Astrocyte of the cerebellum (primary cell): ENCODE measurements at regions of chrX and their contacts with region 1.

Region 1: DNA sequence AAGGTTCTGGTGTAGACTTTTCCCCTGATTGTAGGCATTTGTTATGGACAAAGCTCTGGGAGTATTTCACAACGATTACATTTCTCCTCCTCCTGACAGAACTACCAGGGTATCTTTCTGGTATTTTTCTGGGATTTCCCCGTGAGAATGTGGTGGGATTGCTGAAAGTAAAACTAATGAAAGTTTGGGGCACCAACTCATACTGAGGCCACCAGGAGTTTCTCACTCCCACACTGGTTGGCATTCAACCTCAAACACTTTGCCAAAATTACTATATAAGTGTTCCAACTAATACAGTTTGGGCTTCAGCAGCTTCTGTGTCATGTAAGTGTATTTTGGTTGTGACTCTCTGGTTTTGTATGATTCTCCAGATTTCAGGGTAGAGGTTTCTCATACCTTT is 855.1 kb downstream of the GLUD2 start:
- DNase-seq: no peak
- H3K4me3 ChIP-seq: no peak overlapping the region
- CTCF ChIP-seq: no peak

Region 2: DNA sequence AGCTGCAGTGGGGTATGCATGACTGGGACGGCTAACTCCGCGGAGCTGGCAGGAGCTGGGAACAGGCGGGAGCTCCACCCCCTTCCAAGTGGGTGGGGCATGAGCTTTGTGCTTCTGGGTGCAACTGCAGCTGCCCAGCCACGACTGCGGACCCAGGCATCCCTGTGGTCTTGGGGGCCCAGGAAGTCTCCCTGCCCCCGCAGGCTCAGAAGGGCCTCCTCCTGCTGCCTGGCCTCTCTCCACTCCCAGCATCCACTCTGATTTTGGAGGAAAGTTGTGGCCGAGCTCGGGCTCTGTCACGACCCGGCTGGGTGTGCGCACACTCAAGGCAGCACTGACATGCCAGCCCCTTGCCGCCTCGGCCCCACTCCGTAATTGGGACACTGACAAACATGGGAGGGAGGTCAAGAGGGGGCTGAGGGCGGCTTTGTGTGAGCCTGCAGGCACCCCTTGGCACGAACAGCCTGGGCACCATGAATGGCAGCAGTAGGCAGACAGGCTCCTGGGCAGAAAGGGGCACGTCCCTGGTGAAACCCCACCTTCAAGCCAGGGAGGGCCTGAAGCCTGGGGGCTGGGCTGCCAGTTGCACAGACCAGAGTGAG is 32.5 kb before region 1 on chrX:
- in situ Hi-C with region 1: loop called (anchors 5 kb)
- DNase-seq: no peak
- H3K4me3 ChIP-seq: no peak overlapping the region
- CTCF ChIP-seq: no peak